CD8-positive, alpha-beta memory T cell (primary cell): ENCODE measurements at regions of chr9 and their contacts with region 1.

Region 1: GRCh38 chr9:126398403-126399058 is 71.9 kb downstream of the MVB12B start:
- DNase-seq: peak; percentile 52 to 80 (median 67)
- H3K4me3 ChIP-seq: no peak overlapping the region
- H3K4me3 Mint-ChIP-seq: peak overlapping the region; percentile 8 to 76 (median 65)
- H3K27ac ChIP-seq: no peak overlapping the region
- H3K27ac Mint-ChIP-seq: peak overlapping the region; percentile 80 to 98 (median 92)
- H3K4me1 ChIP-seq: peaks cover 28% of the 10 kb centered on the region
- H3K4me1 Mint-ChIP-seq: peaks cover 36 to 78% (median 50%) of the 10 kb centered on the region in 3 donors
- H3K27me3 ChIP-seq: no peaks in the 10 kb centered on the region
- H3K27me3 Mint-ChIP-seq: no peaks in the 10 kb centered on the region

Region 2: GRCh38 chr9:126283799-126284465 is 114.6 kb before region 1 on chr9:
- CTCF ChIA-PET with region 1: no interaction called
- POLR2A ChIA-PET with region 1: no interaction called
- DNase-seq: no peak
- H3K4me3 ChIP-seq: no peak overlapping the region
- H3K4me3 Mint-ChIP-seq: no peak overlapping the region
- H3K27ac ChIP-seq: no peak overlapping the region
- H3K27ac Mint-ChIP-seq: no peak overlapping the region
- H3K4me1 ChIP-seq: no peaks in the 10 kb centered on the region
- H3K4me1 Mint-ChIP-seq: no peaks in the 10 kb centered on the region
- H3K27me3 ChIP-seq: no peaks in the 10 kb centered on the region
- H3K27me3 Mint-ChIP-seq: peaks cover 4 to 14% of the 10 kb centered on the region in 2 donors

Region 3: DNA sequence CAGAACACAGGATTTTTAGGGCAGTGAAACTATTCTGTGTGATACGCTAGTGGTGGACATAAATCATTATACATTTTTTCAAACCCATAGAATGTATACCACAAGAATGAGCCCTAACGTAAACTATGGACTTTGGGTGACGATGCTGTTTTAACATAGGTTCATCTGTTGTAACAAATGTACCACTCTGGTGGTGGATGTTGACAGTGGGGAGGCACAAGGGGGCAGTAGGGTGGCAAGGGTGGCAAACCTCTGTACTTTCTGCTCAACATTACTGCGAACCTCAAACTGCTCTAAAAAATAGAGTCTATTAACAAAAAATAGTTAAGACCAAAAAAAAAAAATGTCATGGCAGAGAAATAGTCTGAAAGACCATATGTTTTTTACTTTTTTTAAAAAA is 81.0 kb before region 1 on chr9:
- CTCF ChIA-PET with region 1: interaction called, 124 read pairs
- POLR2A ChIA-PET with region 1: interaction called, 3 read pairs
- DNase-seq: peak; percentile 27 to 70 (median 31)
- H3K4me3 ChIP-seq: no peak overlapping the region
- H3K4me3 Mint-ChIP-seq: no peak overlapping the region
- H3K27ac ChIP-seq: no peak overlapping the region
- H3K27ac Mint-ChIP-seq: peak overlapping the region in 4 of 8 donors; percentile 1 to 66 (median 52)
- H3K4me1 ChIP-seq: no peaks in the 10 kb centered on the region
- H3K4me1 Mint-ChIP-seq: peaks cover 13 to 26% (median 14%) of the 10 kb centered on the region in 3 donors
- H3K27me3 ChIP-seq: no peaks in the 10 kb centered on the region
- H3K27me3 Mint-ChIP-seq: peaks cover 0 to 8% of the 10 kb centered on the region in 2 donors

Region 4: DNA sequence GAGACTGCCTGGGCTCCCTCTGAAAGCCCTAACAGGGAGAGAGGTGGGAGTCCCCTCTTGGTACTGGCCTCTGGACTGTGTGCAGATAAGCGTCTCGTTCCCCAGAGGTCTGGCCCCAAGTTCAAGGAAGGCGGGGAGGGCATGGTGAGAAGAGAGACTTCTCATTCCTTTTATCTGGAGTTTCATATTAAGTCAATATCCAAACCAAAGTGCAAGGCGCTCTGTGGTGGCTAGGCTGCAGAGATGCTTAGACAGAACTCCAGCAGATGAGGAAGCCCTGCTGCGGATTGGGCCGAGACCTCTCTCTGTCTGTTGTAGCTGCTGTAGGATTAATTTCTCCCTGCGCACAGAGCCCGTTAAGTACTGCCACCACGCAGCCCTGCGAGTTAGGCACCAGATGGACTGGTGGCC is 55.9 kb before region 1 on chr9:
- CTCF ChIA-PET with region 1: interaction called, 14 read pairs
- POLR2A ChIA-PET with region 1: interaction called, 4 read pairs
- DNase-seq: no peak
- H3K4me3 ChIP-seq: no peak overlapping the region
- H3K4me3 Mint-ChIP-seq: no peak overlapping the region
- H3K27ac ChIP-seq: no peak overlapping the region
- H3K27ac Mint-ChIP-seq: no peak overlapping the region
- H3K4me1 ChIP-seq: no peaks in the 10 kb centered on the region
- H3K4me1 Mint-ChIP-seq: peaks cover 8 to 85% (median 49%) of the 10 kb centered on the region in 3 donors
- H3K27me3 ChIP-seq: no peaks in the 10 kb centered on the region
- H3K27me3 Mint-ChIP-seq: peaks cover 0 to 2% of the 10 kb centered on the region in 2 donors

Region 5: DNA sequence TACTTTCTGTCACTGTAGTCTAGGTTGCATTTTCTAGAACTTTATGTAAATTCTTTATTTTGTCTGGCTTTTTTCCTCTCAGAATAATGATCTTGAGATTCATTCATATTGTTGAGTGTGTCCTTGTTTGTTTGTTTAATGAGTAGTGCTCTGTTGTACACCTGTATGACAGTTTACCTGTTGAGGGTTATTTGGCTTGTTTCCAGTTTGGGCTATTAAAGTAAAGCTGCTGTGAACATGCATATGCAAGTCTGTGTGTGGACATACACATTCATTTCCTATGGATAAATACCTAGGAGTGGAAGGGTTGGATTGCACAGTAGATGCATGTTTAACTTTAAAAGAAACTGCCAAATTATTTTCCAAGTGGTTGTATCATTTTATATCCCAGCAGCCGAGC is 41.5 kb before region 1 on chr9:
- CTCF ChIA-PET with region 1: no interaction called
- POLR2A ChIA-PET with region 1: no interaction called
- DNase-seq: no peak
- H3K4me3 ChIP-seq: no peak overlapping the region
- H3K4me3 Mint-ChIP-seq: no peak overlapping the region
- H3K27ac ChIP-seq: no peak overlapping the region
- H3K27ac Mint-ChIP-seq: peak overlapping the region in 1 of 8 donors; percentile 33
- H3K4me1 ChIP-seq: no peaks in the 10 kb centered on the region
- H3K4me1 Mint-ChIP-seq: peaks cover 24 to 70% (median 52%) of the 10 kb centered on the region in 3 donors
- H3K27me3 ChIP-seq: no peaks in the 10 kb centered on the region
- H3K27me3 Mint-ChIP-seq: no peaks in the 10 kb centered on the region

Region 6: GRCh38 chr9:126471084-126471624 is 72.6 kb after region 1 on chr9:
- CTCF ChIA-PET with region 1: interaction called, 13 read pairs
- POLR2A ChIA-PET with region 1: interaction called, 4 read pairs
- DNase-seq: peak; percentile 60 to 90 (median 76)
- H3K4me3 ChIP-seq: peak overlapping the region; percentile 39
- H3K4me3 Mint-ChIP-seq: peak overlapping the region; percentile 71 to 89 (median 80)
- H3K27ac ChIP-seq: no peak overlapping the region
- H3K27ac Mint-ChIP-seq: peak overlapping the region; percentile 91 to 99 (median 96)
- H3K4me1 ChIP-seq: peaks cover 58% of the 10 kb centered on the region
- H3K4me1 Mint-ChIP-seq: peaks cover 82 to 97% (median 84%) of the 10 kb centered on the region in 3 donors
- H3K27me3 ChIP-seq: no peaks in the 10 kb centered on the region
- H3K27me3 Mint-ChIP-seq: peaks cover 0 to 1% of the 10 kb centered on the region in 2 donors

Region 7: GRCh38 chr9:126490871-126491567 is 92.5 kb after region 1 on chr9:
- CTCF ChIA-PET with region 1: interaction called, 60 read pairs
- POLR2A ChIA-PET with region 1: interaction called, 3 read pairs
- DNase-seq: peak; percentile 34 to 69 (median 54)
- H3K4me3 ChIP-seq: no peak overlapping the region
- H3K4me3 Mint-ChIP-seq: no peak overlapping the region
- H3K27ac ChIP-seq: no peak overlapping the region
- H3K27ac Mint-ChIP-seq: peak overlapping the region in 1 of 8 donors; percentile 1
- H3K4me1 ChIP-seq: peaks cover 5% of the 10 kb centered on the region
- H3K4me1 Mint-ChIP-seq: peaks cover 12 to 19% (median 14%) of the 10 kb centered on the region in 3 donors
- H3K27me3 ChIP-seq: no peaks in the 10 kb centered on the region
- H3K27me3 Mint-ChIP-seq: peaks cover 0 to 8% of the 10 kb centered on the region in 2 donors

Region 8: GRCh38 chr9:126523611-126524111 is 125.1 kb after region 1 on chr9:
- CTCF ChIA-PET with region 1: no interaction called
- POLR2A ChIA-PET with region 1: no interaction called
- DNase-seq: peak in 2 of 5 donors; percentile 59 to 64
- H3K4me3 ChIP-seq: peak overlapping the region; percentile 8
- H3K4me3 Mint-ChIP-seq: peak overlapping the region; percentile 44 to 90 (median 81)
- H3K27ac ChIP-seq: no peak overlapping the region
- H3K27ac Mint-ChIP-seq: peak overlapping the region; percentile 24 to 86 (median 81)
- H3K4me1 ChIP-seq: peaks cover 25% of the 10 kb centered on the region
- H3K4me1 Mint-ChIP-seq: peaks cover 34 to 44% (median 43%) of the 10 kb centered on the region in 3 donors
- H3K27me3 ChIP-seq: peaks cover 9% of the 10 kb centered on the region
- H3K27me3 Mint-ChIP-seq: peaks cover 0 to 6% of the 10 kb centered on the region in 2 donors